HCT116 (cell line): ENCODE measurements at regions of chr20 and their contacts with region 1.

Region 1: DNA sequence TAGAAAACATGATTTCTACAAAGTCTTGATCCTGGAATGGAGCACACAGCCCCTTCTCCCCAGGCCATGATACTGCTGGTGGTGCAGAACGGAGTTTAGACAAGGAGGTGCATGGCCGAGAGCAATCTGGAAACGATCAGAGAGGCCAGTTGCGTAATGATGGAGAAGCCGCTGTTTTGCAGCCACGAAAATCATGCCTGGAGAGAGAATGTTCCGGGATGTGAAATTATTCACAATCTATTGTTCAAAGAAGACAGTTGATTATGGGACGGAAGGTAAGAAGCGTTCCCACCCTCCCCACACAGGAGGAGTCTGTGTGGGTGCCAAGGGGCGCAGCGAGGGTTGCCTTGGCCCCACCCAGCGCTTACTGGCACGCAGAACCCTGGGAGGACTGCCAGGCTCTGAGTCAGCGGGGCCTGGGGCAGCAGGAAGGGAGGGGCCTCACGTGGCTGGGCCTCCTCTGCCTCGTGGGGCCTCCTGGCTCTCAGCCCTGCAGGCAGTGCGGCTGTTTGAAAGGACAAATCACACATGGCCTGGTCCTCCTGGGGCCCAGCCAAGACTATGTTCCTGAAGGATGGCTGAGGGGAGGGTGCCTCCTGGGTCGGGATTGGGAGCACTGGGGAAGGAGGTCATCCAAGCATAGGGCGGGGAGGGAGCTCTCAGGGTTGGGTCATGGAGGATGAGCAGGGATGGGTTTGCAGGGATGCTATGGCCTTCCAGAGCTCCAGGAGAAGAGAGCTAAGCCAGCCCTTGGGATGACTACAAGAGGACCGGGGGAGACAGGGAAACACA is 8.7 kb upstream of the AP5S1 start:
- DNase-seq: peak; percentile 93
- ATAC-seq: peak; percentile 66
- H3K4me3 ChIP-seq: peak overlapping the region; percentile 27 to 53
- H3K27ac ChIP-seq: peak overlapping the region; percentile 99
- H3K4me1 ChIP-seq: peaks cover 65 to 82% of the 10 kb centered on the region in 2 experiments
- H3K27me3 ChIP-seq: no peaks in the 10 kb centered on the region
- CTCF ChIP-seq: no peak
- POLR2A ChIP-seq: no peak
- RAD21 ChIP-seq: no peak

Region 2: GRCh38 chr20:3795511-3796468 is 15.9 kb before region 1 on chr20 and contains the start of gene CDC25B:
- CTCF ChIA-PET with region 1: interaction called, 3 read pairs
- POLR2A ChIA-PET with region 1: interaction called, 14 read pairs
- RAD21 ChIA-PET with region 1: interaction called in 1 of 2 experiments, 3 read pairs
- intact Hi-C with region 1: no loop called
- DNase-seq: peak; percentile 84
- ATAC-seq: peak; percentile 80
- H3K4me3 ChIP-seq: peak within 1 kb of the TSS; percentile 66 to 80
- H3K27ac ChIP-seq: peak within 1 kb of the TSS; percentile 97
- H3K4me1 ChIP-seq: peaks cover 25 to 51% of the 10 kb centered on the region in 2 experiments
- H3K27me3 ChIP-seq: no peaks in the 10 kb centered on the region
- CTCF ChIP-seq: peak in 2 of 3 experiments; percentile 29 to 53; a peak in 3 of 6 replicates
- POLR2A ChIP-seq: peak; percentile 47
- RAD21 ChIP-seq: 0 out of 2 replicates have a peak, but pooled peaks have one; percentile 17
- total RNA-seq, gene CDC25B: 223 TPM